K562 (cell line): ENCODE measurements at regions of chr10 and their contacts with region 1.

Region 1: DNA sequence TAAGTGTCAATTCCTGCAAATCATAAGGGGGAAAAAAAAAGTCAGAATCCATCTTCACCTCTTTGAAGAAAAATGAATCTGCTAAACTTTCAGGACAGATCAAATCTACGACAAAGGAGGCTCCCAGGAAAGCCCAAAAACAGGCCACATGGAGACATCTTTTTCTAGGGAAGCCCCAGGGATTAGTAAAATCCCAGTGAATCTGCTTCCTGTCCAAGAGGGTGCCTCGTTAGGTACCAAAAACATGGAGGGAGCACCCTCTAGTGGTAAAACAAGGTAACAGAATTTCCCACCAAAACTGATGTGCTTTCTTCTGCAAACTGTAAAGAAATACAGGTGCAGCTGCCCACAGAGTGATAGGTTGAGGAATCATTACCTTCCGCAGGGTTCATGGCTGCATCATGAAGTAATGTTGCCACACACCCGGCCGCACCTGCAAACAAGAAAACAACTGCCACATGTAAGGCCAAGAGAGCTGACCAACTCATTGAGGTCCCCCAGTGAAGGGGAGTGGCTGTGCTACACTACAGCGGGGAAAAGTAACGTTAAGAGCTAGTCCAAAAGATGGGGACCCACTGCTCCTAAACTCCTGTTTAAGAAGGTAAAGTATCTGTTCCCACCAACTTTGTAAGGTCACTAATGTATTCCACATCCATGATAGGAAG is 7.9 kb downstream of the SLC25A28 start:
- DNase-seq: peak; percentile 40 to 61 (median 58)
- ATAC-seq: peak; percentile 83
- H3K4me3 ChIP-seq: no peak overlapping the region
- H3K27ac ChIP-seq: no peak overlapping the region
- H3K4me1 ChIP-seq: peaks cover 0 to 4% of the 10 kb centered on the region in 2 experiments; a peak in 3 of 5 replicates
- H3K27me3 ChIP-seq: no peaks in the 10 kb centered on the region
- CTCF ChIP-seq: peak; percentile 68 to 79 (median 70)
- EP300 ChIP-seq: no peak
- POLR2A ChIP-seq: no peak
- RAD21 ChIP-seq: peak; percentile 59 to 71

Region 2: GRCh38 chr10:99395750-99396445 is 216.4 kb before region 1 on chr10:
- CTCF ChIA-PET with region 1: interaction called, 13 read pairs
- POLR2A ChIA-PET with region 1: no interaction called
- in situ Hi-C with region 1: no loop called
- intact Hi-C with region 1: loop called (anchors 2 kb)
- DNase-seq: no peak
- ATAC-seq: no peak; the same call in 1 of the 3 replicates
- H3K4me3 ChIP-seq: no peak overlapping the region
- H3K27ac ChIP-seq: no peak overlapping the region
- H3K4me1 ChIP-seq: no peaks in the 10 kb centered on the region; a peak in 2 of 5 replicates
- H3K27me3 ChIP-seq: peaks cover 0 to 7% of the 10 kb centered on the region in 2 experiments; a peak in 1 of 5 replicates
- CTCF ChIP-seq: no peak
- EP300 ChIP-seq: no peak
- POLR2A ChIP-seq: no peak
- RAD21 ChIP-seq: no peak

Region 3: DNA sequence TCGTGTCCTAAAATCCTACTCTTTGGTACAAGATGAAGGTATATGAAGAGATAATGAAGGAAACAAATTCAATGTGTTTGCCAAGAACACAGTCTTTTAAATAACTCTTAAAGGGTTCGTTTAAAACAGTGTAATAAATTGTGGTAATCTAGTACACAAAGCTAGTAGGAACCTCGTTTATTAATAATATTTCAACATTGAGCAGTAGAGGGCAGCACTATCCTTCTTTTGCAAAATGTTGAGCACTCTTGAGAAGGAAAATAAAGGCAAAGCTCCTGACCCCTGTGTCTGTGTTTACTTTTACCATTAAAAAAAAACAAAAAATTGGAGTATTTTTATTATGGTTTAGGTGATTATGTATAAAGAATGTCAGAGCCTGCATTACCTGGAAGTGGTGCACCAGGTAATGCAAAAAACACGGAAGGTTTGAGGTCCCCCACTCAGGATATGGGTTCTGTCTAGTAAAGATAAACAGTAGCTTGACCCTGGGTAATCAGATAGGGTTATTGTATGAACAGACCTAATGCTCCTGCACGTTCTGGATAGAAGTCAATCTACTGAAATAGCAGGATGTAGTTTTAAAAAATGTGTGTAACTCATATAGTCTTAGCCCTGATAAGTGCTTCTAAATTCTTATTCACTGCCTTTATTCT is 176.2 kb before region 1 on chr10:
- CTCF ChIA-PET with region 1: interaction called, 9 read pairs
- POLR2A ChIA-PET with region 1: no interaction called
- in situ Hi-C with region 1: loop called (anchors 5 kb)
- intact Hi-C with region 1: loop called (anchors 2 kb)
- DNase-seq: peak; percentile 12 to 62 (median 26)
- ATAC-seq: peak; percentile 77
- H3K4me3 ChIP-seq: no peak overlapping the region
- H3K27ac ChIP-seq: peak overlapping the region; percentile 6; the same call in 1 of the 3 replicates
- H3K4me1 ChIP-seq: peaks cover 0 to 17% of the 10 kb centered on the region in 2 experiments; a peak in 2 of 5 replicates
- H3K27me3 ChIP-seq: no peaks in the 10 kb centered on the region
- CTCF ChIP-seq: peak; percentile 33 to 55 (median 36); a peak in 4 of 6 replicates
- EP300 ChIP-seq: no peak; the same call in 1 of the 2 replicates
- POLR2A ChIP-seq: no peak
- RAD21 ChIP-seq: peak; percentile 21 to 45; a peak in 3 of 4 replicates

Region 4: DNA sequence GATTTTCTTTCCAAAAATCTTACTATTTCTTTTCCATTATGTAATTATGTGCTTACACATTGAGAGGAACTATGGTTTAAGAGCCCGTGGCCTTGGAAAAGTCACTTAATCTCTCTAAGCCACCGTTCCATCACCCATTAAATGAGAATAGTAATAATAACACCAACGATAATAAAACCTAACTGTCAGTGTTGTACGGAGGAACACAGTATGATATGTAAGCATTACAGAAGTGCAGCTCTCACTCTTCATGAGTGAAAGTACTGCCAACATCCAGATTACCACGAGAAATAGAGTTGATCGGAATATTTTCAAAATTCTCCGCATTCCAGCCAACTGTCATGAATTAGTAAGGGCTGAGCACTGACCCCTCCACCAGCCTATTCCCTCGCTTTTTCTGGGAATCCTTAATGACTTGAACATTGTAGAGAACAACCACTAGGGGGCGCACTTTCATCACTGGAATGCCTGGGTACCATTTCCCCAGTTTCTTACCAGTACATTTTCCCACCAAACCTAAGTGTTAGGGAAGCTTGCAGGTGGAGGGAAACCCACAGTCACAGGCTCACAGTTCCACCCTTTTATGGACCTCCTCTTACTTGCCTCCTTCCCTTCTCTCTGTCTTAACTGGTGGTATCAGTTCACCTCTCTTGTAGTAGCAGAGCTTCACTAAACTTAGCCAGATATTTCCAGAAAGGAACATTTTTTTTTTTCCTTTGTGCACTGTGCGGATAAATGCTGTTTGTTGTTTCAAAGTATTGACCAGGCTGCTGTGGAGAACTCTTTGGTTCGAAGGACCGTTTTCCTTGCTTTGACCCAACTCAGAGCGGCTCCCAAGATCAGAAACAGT is 51.8 kb before region 1 on chr10:
- CTCF ChIA-PET with region 1: interaction called, 14 read pairs
- POLR2A ChIA-PET with region 1: no interaction called
- in situ Hi-C with region 1: loop called (anchors 5 kb)
- intact Hi-C with region 1: loop called (anchors 2 kb)
- DNase-seq: peak; percentile 51 to 67 (median 54)
- ATAC-seq: peak; percentile 87
- H3K4me3 ChIP-seq: no peak overlapping the region
- H3K27ac ChIP-seq: no peak overlapping the region
- H3K4me1 ChIP-seq: no peaks in the 10 kb centered on the region
- H3K27me3 ChIP-seq: peaks cover 1 to 7% of the 10 kb centered on the region in 2 experiments; a peak in 3 of 5 replicates
- CTCF ChIP-seq: peak; percentile 42 to 70 (median 69)
- EP300 ChIP-seq: no peak
- POLR2A ChIP-seq: no peak
- RAD21 ChIP-seq: peak; percentile 48 to 78